Right ventricle myocardium superior (tissue), 1 donor: ENCODE measurements at regions of chr20 and their contacts with region 1.

Region 1: GRCh38 chr20:1325173-1326030 is 3.5 kb downstream of the SDCBP2 start:
- DNase-seq: peak; percentile 99
- ATAC-seq: peak; percentile 96

Region 2: DNA sequence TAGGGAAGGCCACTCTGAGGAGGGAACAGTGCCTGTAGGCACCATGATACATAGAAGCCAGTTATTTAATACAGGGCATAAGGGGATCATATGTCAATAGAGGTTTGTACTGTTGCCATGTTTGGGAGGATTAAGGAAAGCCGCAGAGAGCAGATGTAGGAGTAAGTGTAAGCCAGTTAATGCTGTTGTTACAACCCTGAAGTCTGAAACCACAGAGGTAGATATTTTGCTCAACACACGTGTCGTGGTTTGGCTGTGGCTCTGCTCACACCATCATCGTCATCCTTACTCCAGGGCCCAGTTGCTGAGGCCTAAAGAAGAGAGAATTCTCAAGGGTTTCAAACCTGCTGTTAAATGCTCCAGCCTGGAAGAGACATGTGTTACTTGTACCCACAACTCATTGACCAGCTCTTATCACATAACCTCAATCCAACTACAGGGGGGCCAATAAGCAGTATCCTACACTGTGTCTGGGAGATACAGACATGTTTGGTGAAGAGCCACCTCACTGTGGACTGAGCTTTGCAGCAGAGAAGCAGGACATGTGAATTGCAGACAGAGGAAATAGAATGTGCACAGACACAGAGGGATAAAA is 238.0 kb before region 1 on chr20:
- intact Hi-C with region 1: no loop called
- DNase-seq: no peak
- ATAC-seq: no peak

Region 3: DNA sequence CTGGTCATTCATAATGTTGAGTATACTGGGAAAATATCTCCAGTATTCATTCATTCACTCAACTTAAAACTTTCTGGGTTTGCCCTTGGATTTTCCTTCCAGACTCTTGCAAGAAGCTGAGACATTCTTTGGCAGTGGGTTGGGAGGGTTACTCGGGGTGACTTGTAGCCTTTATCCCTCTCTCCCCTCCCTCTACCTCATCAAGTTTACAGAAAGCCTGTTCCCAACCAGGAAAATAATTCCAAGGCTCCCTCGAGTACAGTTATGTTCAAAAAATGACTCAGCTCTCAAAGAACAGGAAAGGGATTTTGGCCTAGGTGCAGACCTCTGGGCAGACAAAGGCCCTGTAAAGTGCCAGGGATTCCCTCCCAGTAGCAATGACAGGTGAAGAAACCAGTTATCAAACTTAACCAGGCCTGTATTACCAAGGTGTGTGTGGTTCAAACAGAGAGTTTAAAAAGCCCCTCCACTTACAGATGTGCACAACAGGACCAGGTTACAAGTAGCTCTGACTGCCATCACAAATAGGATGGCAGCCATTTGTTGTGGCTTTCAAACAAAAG is 45.2 kb after region 1 on chr20:
- intact Hi-C with region 1: loop called (anchors 5 kb)
- DNase-seq: no peak
- ATAC-seq: peak; percentile 73

Region 4: DNA sequence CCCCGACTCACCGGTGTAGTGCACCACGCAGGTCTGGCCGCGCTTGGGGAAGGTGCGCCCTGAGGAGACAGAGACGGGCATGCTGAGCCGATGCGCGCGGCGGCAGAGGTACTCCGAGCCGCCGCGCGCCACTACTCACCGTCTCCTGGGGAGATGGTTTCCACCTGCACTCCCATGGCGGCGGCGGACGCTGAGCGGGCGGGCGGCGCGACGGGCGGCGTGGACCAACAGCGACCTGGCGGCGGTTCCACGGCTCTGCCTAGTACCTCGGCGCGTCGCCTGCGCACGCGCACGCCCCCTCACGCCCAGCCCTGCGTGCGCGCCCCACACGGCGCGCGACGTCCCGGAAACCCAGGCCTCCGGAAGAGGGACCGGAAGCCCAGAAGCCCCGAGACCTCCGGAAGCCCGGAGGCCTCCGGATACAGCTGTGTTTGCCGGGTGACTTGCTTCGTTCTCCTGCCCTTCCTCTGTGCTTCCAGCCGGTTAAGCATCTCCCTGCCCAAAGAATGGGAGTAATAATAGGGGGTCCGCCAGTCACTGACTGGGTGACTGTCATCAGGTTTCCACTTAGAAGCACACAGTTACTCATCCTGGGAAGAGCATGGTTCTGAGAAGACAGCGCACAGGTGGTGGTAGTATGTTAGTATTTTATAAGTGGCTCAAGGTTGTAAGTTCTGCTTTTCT is 67.6 kb after region 1 on chr20 and contains the start of gene FKBP1A:
- intact Hi-C with region 1: loop called (anchors 2 kb)
- DNase-seq: peak; percentile 96
- ATAC-seq: peak; percentile 99
- total RNA-seq, gene FKBP1A: 112 TPM

Region 5: GRCh38 chr20:1764136-1765033 is 439.0 kb after region 1 on chr20:
- intact Hi-C with region 1: no loop called
- DNase-seq: peak; percentile 87
- ATAC-seq: peak; percentile 96